ENCODE measurements at regions of chr3 and their contacts with region 1.

Region 1: DNA sequence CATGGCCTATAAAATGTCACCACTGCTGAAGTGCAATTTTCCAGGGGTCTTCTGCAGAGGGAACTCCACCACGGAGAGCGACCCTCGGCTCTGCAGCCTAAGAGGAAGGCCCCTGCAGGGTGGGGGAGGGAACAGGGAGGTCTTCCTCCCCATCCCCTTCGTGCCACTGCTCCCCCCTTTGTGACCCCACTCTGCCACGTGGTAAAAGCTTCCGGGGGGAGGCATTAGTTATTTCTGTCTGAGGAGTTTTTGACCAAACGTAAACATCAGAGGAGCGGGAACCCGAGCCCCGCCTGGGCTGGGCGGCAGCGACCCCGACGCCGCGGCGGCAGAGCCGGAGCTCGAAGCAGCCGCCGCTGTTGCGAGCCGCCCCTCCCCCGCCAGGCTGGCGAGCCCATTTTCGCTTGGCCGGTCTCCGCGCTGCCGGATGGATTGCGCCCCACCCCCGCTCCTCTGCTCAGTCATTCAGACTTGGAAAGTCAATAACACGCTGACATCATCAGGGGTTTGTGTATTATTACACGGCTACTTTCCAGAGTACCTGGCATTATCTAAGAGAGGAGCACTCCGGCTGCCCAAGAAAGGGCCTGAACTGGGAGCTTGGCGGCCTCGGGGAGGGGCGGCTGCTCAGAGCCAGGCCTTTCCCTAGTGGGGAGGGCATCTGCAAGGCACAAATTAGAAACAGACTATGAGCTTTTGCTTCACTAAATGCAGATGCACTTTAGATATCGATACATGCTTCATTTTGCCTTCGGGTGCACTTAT is 162.5 kb upstream of the TBL1XR1 start:
- DNase-seq: peak; percentile 91
- CTCF ChIP-seq: peak; percentile 19

Region 2: GRCh38 chr3:176906046-176906905 is 453.5 kb before region 1 on chr3:
- in situ Hi-C with region 1: no loop called
- DNase-seq: no peak
- CTCF ChIP-seq: no peak

Region 3: GRCh38 chr3:177197041-177197727 is 162.6 kb before region 1 on chr3 and contains the start of gene TBL1XR1:
- in situ Hi-C with region 1: loop called (anchors 10 kb)
- DNase-seq: peak; percentile 89
- CTCF ChIP-seq: no peak

Region 4: DNA sequence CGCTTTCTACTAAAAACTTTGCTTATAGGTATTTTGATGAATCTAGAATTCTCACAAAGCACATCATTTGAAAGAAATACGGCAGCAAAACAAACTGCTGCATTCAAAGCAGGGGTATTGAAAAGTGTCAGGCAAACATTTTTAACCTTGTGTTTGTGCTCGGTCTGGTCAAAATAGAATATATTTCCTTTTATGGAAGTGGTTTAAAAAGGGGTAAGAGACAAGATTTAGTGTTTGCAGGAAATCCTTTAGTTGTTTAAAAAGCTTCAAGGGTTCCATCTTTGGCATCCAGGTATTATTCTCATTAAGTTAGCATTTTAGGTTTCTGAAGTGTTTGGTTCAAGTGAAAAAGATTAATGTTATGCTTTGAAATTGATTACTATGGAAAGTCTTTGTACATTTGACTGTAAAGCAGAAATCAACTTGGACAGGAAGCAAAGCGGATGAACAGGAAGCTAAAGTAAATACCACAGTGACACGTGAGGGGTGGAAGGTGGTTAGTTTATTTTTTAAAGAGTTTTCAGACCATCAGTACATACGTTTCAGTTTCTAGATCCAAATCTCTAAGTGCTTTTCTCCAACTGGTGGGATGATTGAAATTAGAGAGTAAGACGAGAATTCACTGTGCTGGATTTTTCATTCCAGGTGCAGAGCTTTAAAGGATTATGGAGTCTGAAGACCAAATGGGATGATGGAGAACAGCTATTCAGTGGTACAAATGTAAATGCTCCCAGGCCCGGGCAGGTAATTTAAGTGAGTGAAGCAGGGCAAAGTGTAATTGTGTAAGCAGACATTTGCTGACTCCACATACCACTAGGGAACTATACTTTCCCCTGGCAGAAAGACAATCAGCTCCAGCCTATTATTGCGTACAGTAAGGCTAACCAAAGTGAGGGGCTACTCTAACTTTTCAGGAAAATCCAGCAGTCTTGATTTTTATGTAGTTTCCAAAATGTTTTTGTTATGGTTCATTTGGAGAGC is 179.3 kb after region 1 on chr3:
- in situ Hi-C with region 1: no loop called
- DNase-seq: no peak
- CTCF ChIP-seq: no peak

Region 5: GRCh38 chr3:178036745-178037144 is 677.0 kb after region 1 on chr3:
- in situ Hi-C with region 1: no loop called
- DNase-seq: no peak
- CTCF ChIP-seq: no peak